Heart right ventricle (tissue), 16 donors: ENCODE measurements at regions of chr20 and their contacts with region 1.

Region 1: DNA sequence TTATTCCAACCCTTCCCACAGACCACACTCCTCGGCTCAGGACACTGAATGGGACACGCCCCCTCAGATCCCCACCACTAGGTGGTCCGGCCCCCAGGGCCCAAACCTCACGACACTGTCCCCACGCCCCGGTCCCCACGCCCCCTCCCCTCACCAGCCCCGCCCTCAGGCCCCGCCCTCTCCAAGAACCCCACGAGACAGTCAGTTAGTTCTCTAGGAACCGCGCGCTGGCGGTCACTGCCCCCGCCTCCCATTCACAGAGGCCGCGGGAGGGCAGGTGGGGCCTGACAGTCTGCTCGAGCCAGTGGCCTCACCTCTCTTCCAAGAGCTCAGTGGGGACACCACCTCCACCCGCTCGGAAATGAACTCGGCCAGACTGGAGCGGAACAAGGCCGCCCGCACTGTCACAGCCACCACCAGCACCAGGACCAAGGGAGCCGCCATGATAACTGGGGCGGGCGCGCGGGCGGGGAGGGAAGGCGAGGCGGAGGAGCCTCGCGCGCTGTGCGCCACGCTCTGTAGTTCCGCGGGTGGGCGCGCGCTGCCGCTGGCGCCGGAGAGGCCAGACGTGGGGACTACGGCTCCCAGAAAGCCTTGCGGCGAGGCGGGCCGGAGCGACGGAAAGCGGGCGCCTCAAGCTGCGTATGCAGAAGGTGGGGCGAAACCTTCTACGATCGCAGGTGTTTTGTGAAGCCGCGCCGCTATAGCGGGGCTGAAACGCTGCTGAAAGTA is at the start of gene PIGU:
- DNase-seq: peak; percentile 94 to 95
- ATAC-seq: peak; percentile 100
- H3K4me3 ChIP-seq: peak within 1 kb of the TSS; percentile 50 to 84 (median 76)
- H3K27ac ChIP-seq: peak within 1 kb of the TSS in 9 of 10 donors; percentile 53 to 89 (median 79)
- H3K4me1 ChIP-seq: peaks cover 0 to 20% (median 11%) of the 10 kb centered on the region in 9 donors
- H3K27me3 ChIP-seq: no peaks in the 10 kb centered on the region
- CTCF ChIP-seq: peak in 7 of 9 donors; percentile 20 to 60 (median 32)
- total RNA-seq, gene PIGU: 11.0 to 20.4 (median 14.1) TPM

Region 2: DNA sequence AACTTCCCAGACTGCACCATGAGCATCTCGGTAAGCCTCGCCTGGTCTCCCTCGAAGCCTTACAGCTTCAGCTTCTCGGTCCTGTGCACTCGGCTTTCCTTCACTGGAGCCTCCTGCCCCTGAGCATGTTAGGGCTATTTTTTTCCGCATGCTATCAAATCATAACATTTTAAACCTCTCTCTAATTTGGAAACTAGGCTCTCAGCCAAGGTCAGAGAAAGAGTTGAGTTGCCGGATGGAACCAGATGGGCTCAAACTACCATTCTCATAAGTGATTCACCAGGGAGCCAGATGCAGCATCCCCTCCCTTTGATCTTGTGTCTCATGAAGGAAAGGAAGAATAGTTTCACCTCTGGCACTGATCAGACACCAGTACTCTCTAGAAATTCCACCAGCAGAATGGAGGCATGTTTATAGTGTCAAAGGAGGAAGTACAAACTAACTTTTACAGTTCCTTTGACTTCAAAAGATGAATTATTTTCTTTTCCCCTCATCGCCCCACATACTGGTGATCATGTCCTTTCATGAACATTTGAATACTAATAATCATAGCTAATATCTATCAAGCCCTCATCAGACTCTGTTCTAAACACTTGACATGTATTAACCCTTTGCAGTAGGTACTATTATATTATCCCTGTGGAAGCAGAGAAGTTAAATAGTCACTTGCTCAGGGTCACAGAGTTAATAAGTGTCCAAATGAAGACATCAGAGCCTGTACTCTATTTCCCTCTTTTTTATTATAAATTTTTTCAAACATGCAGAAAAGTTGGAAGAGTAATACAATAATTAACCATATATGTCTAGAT is 71.6 kb before region 1 on chr20:
- intact Hi-C with region 1: loop called in 1 of 10 experiments (anchors 5 kb)
- DNase-seq: peak in 1 of 2 donors; percentile 54
- ATAC-seq: peak; percentile 15 to 77 (median 65)
- H3K4me3 ChIP-seq: no peak overlapping the region
- H3K27ac ChIP-seq: peak overlapping the region in 8 of 10 donors; percentile 39 to 72 (median 54)
- H3K4me1 ChIP-seq: peaks cover 0 to 55% (median 18%) of the 10 kb centered on the region in 9 donors
- H3K27me3 ChIP-seq: no peaks in the 10 kb centered on the region
- CTCF ChIP-seq: no peak

Region 3: GRCh38 chr20:34637245-34638038 is 39.4 kb before region 1 on chr20:
- intact Hi-C with region 1: loop called in 1 of 10 experiments (anchors 5 kb)
- DNase-seq: peak in 1 of 2 donors; percentile 46
- ATAC-seq: peak; percentile 71 to 95 (median 80)
- H3K4me3 ChIP-seq: no peak overlapping the region
- H3K27ac ChIP-seq: peak overlapping the region in 9 of 10 donors; percentile 45 to 77 (median 56)
- H3K4me1 ChIP-seq: peaks cover 0 to 26% (median 7%) of the 10 kb centered on the region in 9 donors
- H3K27me3 ChIP-seq: no peaks in the 10 kb centered on the region
- CTCF ChIP-seq: no peak